ENCODE measurements at regions of chr5 and their contacts with region 1.

Region 1: GRCh38 chr5:40688127-40688761 is 8.5 kb downstream of the PTGER4 start:
- DNase-seq: peak; percentile 84
- H3K4me3 Mint-ChIP-seq: peak overlapping the region; percentile 29
- H3K27ac Mint-ChIP-seq: peak overlapping the region; percentile 43
- H3K4me1 Mint-ChIP-seq: peaks cover 28% of the 10 kb centered on the region
- H3K27me3 Mint-ChIP-seq: no peaks in the 10 kb centered on the region
- CTCF ChIP-seq: peak; percentile 75

Region 2: DNA sequence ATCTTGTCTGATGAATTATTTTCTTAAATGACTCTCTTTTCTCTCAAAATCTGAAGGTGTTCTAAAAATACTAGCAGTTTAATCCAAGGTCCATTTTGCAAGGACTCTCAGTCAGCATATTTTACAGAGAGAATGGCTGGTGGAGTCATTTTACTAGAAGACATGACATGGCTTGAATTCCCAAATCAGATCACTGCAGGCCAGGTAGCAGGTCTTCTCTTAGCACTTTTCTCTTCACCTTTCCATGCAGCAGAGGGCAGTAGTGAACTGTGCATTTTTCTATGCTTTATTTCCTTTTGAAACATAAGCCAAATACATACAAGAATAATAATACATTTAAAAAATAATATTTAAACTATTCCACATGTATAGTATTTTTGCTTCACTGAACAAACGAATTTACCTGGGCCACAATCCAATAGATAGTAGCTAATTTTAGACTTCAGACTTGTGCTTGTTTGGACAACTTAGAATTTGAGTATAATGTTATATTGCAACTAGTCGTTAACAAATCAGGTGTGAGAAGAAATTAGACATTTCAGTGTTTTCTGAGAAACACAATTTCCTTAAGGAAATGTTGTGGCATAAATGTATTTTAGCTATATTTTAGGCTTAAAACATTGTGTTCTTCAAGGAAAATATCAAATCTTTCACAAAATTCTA is 974.1 kb before region 1 on chr5:
- CTCF ChIA-PET with region 1: interaction called, 4 read pairs
- intact Hi-C with region 1: loop called (anchors 1 kb)
- DNase-seq: peak; percentile 61
- H3K4me3 Mint-ChIP-seq: no peak overlapping the region
- H3K27ac Mint-ChIP-seq: no peak overlapping the region
- H3K4me1 Mint-ChIP-seq: peaks cover 31% of the 10 kb centered on the region
- H3K27me3 Mint-ChIP-seq: no peaks in the 10 kb centered on the region
- CTCF ChIP-seq: peak; percentile 52

Region 3: DNA sequence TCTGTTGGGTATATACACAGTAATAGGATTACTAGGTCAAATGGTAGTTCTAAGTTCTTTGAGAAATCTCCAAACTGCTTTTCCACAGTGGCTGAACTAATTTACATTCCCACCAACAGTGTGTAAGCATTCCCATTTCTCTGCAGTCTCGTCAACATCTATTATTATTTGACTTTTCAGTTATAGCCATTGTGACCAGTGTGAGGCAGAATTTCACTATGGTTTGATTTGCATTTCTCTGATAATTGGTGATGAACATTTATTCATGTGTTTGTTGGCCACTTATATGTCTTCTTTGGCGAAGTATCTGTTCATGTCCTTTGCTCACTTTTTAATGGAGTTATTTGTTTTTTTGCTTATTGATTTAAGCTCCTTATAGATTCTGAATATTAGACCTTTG is 667.2 kb before region 1 on chr5:
- CTCF ChIA-PET with region 1: no interaction called
- intact Hi-C with region 1: loop called (anchors 10 kb)
- DNase-seq: no peak
- H3K4me3 Mint-ChIP-seq: no peak overlapping the region
- H3K27ac Mint-ChIP-seq: no peak overlapping the region
- H3K4me1 Mint-ChIP-seq: no peaks in the 10 kb centered on the region
- H3K27me3 Mint-ChIP-seq: no peaks in the 10 kb centered on the region
- CTCF ChIP-seq: no peak

Region 4: DNA sequence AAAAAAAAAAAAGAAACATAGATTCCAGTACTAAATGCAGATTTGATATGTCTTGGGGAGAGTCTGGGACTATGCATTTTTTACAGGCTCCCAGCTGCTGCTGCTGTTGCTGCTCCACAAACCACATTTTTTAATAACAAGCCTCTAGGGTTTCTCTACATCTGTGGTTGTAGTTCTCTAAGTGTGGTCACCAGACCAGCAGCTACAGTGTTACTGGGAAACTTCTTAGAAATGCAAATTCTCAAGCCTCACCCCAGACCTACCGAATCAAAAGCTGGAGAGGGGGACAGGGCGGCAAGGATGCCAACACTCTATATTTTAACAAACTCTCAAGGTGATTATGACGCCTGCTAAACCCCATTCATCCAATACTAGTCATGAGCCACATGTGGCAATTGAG is 302.0 kb before region 1 on chr5:
- CTCF ChIA-PET with region 1: no interaction called
- intact Hi-C with region 1: loop called (anchors 5 kb)
- DNase-seq: no peak
- H3K4me3 Mint-ChIP-seq: no peak overlapping the region
- H3K27ac Mint-ChIP-seq: no peak overlapping the region
- H3K4me1 Mint-ChIP-seq: peaks cover 17% of the 10 kb centered on the region
- H3K27me3 Mint-ChIP-seq: no peaks in the 10 kb centered on the region
- CTCF ChIP-seq: no peak

Region 5: GRCh38 chr5:40736103-40736875 is 48.0 kb after region 1 on chr5:
- CTCF ChIA-PET with region 1: interaction called, 4 read pairs
- intact Hi-C with region 1: loop called (anchors 2 kb)
- DNase-seq: peak; percentile 25
- H3K4me3 Mint-ChIP-seq: no peak overlapping the region
- H3K27ac Mint-ChIP-seq: peak overlapping the region; percentile 73
- H3K4me1 Mint-ChIP-seq: peaks cover 29% of the 10 kb centered on the region
- H3K27me3 Mint-ChIP-seq: no peaks in the 10 kb centered on the region
- CTCF ChIP-seq: peak; percentile 46

Measured in Calu3 (cell line).